CD4-positive, alpha-beta memory T cell (primary cell): ENCODE measurements at regions of chr10 and their contacts with region 1.

Region 1: DNA sequence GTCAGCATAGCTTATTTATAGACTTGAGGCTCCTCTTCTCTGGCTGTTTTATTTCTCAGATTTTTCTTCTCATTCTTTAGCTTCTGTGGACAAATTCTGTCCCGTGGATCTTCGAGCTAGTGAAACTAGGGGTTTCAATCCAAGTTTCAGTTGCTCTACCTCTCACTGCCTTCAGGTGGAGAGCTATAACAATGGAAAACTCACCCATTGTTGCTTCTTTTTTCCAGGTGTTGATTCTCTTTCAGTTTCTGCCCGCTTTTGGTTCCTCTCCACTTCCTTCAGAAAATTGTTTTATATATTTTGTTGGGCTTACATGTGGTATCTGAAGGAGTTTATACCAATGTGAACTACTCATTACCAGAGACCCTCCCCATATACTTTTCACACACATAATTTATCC is 266.1 kb downstream of the TCF7L2 start:
- DNase-seq: no peak
- H3K4me3 ChIP-seq: no peak overlapping the region
- H3K4me3 Mint-ChIP-seq: no peak overlapping the region
- H3K27ac ChIP-seq: no peak overlapping the region
- H3K27ac Mint-ChIP-seq: no peak overlapping the region
- H3K4me1 ChIP-seq: no peaks in the 10 kb centered on the region
- H3K4me1 Mint-ChIP-seq: peaks cover 0 to 6% (median 1%) of the 10 kb centered on the region in 4 donors
- H3K27me3 ChIP-seq: no peaks in the 10 kb centered on the region
- H3K27me3 Mint-ChIP-seq: peaks cover 3 to 8% of the 10 kb centered on the region in 2 donors

Region 2: DNA sequence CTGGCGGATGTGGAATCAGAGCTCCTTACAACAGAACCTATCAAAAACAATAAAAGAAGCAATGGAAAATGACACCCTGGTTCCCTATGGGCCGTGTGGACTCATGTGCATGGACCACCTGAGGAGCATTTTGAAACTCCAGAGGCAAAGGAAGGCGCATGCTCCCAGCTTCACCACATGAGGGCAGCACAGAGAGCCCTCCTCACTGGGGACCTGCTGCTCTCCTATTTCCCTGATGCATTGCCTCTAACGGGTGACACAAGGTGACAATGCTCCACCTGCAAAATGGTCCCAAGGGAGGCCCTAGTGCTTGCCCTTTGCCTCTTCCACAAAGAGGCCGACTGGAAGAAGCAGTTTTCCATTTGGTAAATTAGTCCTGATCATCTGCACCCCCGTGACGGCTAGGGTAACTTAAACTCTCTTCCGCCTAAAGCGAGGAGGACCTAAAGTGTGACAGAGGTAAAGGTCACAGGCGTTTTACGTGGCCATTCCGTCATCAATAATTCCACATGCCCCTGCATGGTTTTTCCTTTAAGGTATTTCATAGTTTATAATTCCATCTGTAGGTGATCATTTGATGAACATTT is 1100.2 kb before region 1 on chr10:
- CTCF ChIA-PET with region 1: no interaction called
- POLR2A ChIA-PET with region 1: no interaction called
- intact Hi-C with region 1: loop called (anchors 10 kb)
- DNase-seq: peak in 4 of 5 donors; percentile 11 to 23 (median 20)
- H3K4me3 ChIP-seq: no peak overlapping the region
- H3K4me3 Mint-ChIP-seq: no peak overlapping the region
- H3K27ac ChIP-seq: no peak overlapping the region
- H3K27ac Mint-ChIP-seq: no peak overlapping the region
- H3K4me1 ChIP-seq: no peaks in the 10 kb centered on the region
- H3K4me1 Mint-ChIP-seq: no peaks in the 10 kb centered on the region
- H3K27me3 ChIP-seq: no peaks in the 10 kb centered on the region
- H3K27me3 Mint-ChIP-seq: peaks cover 0 to 6% of the 10 kb centered on the region in 2 donors

Region 3: DNA sequence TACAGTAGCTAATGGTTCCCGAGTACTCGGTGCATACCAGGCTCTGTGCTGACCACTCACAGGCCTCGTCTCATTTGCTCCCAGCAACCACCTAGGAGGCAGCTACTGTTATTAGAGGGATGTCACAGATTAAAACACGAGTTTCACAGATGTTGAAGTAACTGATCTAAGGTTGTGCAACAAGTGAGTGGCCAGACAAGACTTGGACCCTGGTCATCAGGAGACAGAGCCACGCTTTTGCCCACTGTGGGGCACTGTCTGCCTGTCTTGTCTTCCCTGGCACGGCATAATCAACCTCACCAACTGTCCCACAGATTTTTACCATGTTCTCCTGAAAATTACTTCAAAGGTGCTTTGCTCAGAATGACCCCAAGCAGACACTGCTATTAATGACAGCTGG is 225.1 kb after region 1 on chr10:
- CTCF ChIA-PET with region 1: no interaction called
- POLR2A ChIA-PET with region 1: no interaction called
- intact Hi-C with region 1: no loop called
- DNase-seq: no peak
- H3K4me3 ChIP-seq: no peak overlapping the region
- H3K4me3 Mint-ChIP-seq: no peak overlapping the region
- H3K27ac ChIP-seq: no peak overlapping the region
- H3K27ac Mint-ChIP-seq: no peak overlapping the region
- H3K4me1 ChIP-seq: no peaks in the 10 kb centered on the region
- H3K4me1 Mint-ChIP-seq: no peaks in the 10 kb centered on the region
- H3K27me3 ChIP-seq: no peaks in the 10 kb centered on the region
- H3K27me3 Mint-ChIP-seq: peaks cover 0 to 2% of the 10 kb centered on the region in 2 donors